Activated CD4-positive, alpha-beta T cell treated with anti-CD3 and anti-CD28 coated beads for 36 hours (primary cell): ENCODE measurements at regions of chr17 and their contacts with region 1.

Region 1: GRCh38 chr17:78383725-78384471 is 5.4 kb downstream of the PGS1 start:
- DNase-seq: peak; percentile 86
- ATAC-seq: peak; percentile 42
- H3K4me3 Mint-ChIP-seq: peak overlapping the region; percentile 88
- H3K27ac Mint-ChIP-seq: peak overlapping the region; percentile 98
- H3K4me1 Mint-ChIP-seq: peaks cover 89% of the 10 kb centered on the region
- H3K27me3 Mint-ChIP-seq: no peaks in the 10 kb centered on the region

Region 2: DNA sequence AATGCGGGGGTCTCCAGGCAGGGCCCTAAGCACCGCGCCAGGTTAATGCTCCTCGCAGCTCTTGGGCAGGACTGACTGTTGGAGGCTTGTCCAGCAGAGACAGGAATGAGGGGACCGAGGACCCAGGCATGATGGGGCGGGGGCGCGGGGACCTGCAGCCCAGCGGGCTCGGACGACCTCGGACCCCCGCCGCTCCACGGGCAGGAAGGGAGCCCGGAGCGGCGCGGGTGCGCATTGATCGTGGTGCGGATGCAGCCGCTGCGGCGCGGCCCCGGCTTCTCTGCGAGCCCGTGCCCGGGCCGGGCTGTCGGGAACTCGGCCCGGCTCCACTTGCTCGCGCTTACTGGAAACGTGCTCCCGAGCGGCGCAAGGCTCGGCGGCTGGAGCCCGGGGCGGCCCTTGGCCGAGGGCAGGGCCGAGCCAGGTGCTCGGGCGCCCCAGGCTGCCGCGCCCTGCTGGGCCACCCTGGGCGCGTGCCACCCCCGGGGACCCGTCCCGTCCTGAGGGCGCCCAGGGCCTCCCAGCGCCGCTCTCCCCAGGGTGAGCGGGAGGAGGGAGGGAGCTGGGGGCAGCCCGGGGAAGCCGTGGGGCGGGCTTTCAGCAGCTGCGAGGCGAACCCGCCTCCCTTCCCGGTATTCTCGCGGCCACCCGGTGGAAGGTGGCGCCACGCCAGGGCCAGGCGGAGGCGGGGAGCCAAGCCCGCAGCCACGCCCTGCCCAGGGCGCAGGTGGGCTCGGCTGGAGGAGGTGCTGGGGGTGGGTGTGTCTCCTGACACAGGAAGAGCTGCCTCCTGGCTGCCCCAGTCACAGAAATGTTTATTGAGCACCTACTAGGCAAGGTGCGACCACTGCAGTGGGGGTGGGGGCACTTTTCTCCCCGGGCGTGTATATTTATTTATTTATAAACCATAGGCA is 69.9 kb before region 1 on chr17:
- CTCF ChIA-PET with region 1: interaction called, 3 read pairs
- POLR2A ChIA-PET with region 1: no interaction called
- intact Hi-C with region 1: loop called in 1 of 2 experiments (anchors 1 kb)
- DNase-seq: peak; percentile 87
- ATAC-seq: peak; percentile 63
- H3K4me3 Mint-ChIP-seq: peak overlapping the region; percentile 52
- H3K27ac Mint-ChIP-seq: peak overlapping the region; percentile 74
- H3K4me1 Mint-ChIP-seq: peaks cover 49% of the 10 kb centered on the region
- H3K27me3 Mint-ChIP-seq: peaks cover 2% of the 10 kb centered on the region

Region 3: DNA sequence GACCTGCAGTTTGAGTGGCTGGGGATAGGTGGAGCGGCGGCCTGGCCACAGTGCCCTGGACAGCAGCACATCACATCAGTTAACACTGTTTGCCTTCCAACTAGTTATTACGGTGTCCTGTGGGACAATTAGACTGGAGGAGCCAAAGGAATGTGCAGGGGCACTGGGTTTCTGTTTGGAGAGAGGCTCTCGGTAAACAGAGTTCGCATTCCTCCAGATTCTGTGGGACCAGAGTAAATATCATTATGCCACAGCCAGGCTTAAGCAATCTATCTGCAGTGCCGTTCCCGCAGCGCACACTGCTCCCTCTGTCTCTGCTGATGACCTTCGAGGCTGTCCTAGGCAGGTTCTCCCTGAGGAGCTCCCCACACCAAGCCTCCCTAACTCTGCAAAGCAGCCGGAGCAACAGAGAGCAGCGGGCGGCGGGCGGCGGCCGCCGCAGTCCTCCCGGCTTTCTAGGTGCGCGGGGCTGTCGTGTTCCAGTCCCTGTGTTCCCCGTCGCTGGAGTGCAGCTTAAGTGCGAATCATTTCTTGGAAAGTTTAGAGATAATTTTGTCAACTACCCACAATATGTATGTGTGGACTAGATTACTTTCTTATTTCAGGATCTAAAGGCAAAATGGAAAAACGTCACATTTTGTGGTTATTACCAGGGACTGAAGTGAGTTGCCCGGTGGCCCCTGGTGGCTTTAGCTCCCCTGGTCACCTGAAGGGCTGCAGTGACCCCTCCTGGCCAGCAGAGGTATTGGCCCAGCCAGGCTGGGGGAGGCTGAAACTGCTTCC is 37.8 kb after region 1 on chr17:
- CTCF ChIA-PET with region 1: interaction called, 10 read pairs
- POLR2A ChIA-PET with region 1: interaction called, 6 read pairs
- intact Hi-C with region 1: no loop called
- DNase-seq: peak; percentile 85
- ATAC-seq: peak; percentile 86
- H3K4me3 Mint-ChIP-seq: no peak overlapping the region
- H3K27ac Mint-ChIP-seq: peak overlapping the region; percentile 34
- H3K4me1 Mint-ChIP-seq: peaks cover 38% of the 10 kb centered on the region
- H3K27me3 Mint-ChIP-seq: no peaks in the 10 kb centered on the region

Region 4: DNA sequence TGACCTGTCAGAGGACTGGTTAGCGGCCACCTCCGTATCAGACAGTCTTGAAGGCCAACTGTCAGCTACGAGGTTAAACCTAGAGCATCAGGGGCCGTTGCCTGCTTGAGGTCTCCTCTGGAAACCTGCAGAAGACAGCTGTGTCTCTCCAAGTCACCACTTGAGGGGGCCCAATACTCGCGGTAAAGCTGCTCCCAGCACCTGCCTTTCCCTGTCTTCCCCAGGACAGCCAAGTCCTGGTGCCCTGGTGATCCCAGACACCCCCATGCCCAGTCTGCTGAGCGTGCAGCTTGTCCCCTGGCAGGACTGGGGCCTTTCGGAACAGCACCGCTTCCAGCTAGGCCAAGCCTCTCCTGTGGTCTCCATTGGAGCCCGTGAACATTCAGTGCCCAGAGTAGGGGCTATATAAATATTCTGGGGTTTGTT is 113.2 kb after region 1 on chr17:
- CTCF ChIA-PET with region 1: no interaction called
- POLR2A ChIA-PET with region 1: no interaction called
- intact Hi-C with region 1: no loop called
- DNase-seq: peak; percentile 76
- ATAC-seq: peak; percentile 79
- H3K4me3 Mint-ChIP-seq: no peak overlapping the region
- H3K27ac Mint-ChIP-seq: no peak overlapping the region
- H3K4me1 Mint-ChIP-seq: no peaks in the 10 kb centered on the region
- H3K27me3 Mint-ChIP-seq: no peaks in the 10 kb centered on the region

Region 5: DNA sequence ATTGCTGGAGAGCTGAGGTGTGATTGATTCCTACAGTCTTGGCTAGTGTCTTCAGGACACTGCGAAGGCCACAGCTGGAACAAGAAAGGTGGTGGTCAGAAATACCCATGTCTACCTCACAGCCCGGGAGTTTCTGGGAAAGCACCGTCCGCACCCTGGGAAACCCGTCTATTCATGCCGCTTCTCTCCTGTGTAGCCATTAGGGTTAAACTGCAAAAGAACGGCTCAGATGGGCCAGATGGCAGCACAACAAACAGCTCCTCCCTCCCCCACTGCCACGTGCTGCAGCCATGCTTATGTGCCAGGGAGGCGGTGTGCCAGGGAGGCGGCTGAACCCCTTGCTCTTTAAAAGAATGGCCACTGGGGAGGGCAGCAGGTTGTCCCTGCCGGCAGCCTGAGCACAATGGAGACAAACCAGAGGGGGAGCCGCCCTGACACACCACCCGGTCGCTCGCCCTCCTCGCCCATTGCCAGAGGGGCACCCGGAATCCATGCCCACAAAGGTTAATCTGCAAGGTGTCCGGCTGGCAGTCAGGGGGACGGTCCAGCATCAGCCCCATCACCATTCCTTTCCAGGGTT is 333.0 kb after region 1 on chr17:
- CTCF ChIA-PET with region 1: no interaction called
- POLR2A ChIA-PET with region 1: no interaction called
- intact Hi-C with region 1: loop called in 1 of 2 experiments (anchors 5 kb)
- DNase-seq: peak; percentile 67
- ATAC-seq: peak; percentile 17
- H3K4me3 Mint-ChIP-seq: peak overlapping the region; percentile 43
- H3K27ac Mint-ChIP-seq: peak overlapping the region; percentile 83
- H3K4me1 Mint-ChIP-seq: peaks cover 90% of the 10 kb centered on the region
- H3K27me3 Mint-ChIP-seq: no peaks in the 10 kb centered on the region

Region 6: DNA sequence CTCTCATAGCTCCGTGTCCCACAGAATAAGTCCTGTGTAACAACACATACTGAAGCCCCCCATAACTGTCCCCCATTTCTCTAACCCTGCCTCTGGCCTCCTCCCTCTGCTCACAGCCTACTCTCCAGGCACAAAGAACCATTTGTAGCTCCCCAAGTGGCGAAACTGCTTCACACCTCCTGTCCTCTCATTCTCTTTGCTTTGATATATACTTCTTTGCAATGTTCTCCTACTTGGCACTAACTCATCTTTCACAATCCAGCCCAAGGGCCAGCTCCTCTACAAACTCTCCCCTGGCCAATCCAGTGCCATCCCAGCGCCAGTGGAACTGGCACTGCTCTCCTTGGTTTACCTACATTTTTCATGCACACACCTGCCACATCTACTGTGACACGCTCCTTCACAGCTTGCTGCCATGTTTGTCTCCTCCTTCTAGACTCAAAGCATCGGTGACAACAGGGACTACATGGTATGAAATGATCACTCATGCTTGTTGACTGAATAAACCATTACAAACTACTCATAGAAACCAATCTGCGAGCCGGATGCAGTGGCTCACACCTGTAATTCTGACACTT is 385.4 kb after region 1 on chr17:
- CTCF ChIA-PET with region 1: no interaction called
- POLR2A ChIA-PET with region 1: no interaction called
- intact Hi-C with region 1: loop called in 1 of 2 experiments (anchors 1 kb)
- DNase-seq: no peak
- ATAC-seq: peak; percentile 35
- H3K4me3 Mint-ChIP-seq: no peak overlapping the region
- H3K27ac Mint-ChIP-seq: no peak overlapping the region
- H3K4me1 Mint-ChIP-seq: peaks cover 45% of the 10 kb centered on the region
- H3K27me3 Mint-ChIP-seq: no peaks in the 10 kb centered on the region

Region 7: GRCh38 chr17:78774956-78775571 is 391.2 kb after region 1 on chr17:
- CTCF ChIA-PET with region 1: no interaction called
- POLR2A ChIA-PET with region 1: no interaction called
- intact Hi-C with region 1: loop called (anchors 1 to 5 kb)
- DNase-seq: peak; percentile 86
- ATAC-seq: peak; percentile 67
- H3K4me3 Mint-ChIP-seq: peak overlapping the region; percentile 84
- H3K27ac Mint-ChIP-seq: peak overlapping the region; percentile 100
- H3K4me1 Mint-ChIP-seq: peaks cover 68% of the 10 kb centered on the region
- H3K27me3 Mint-ChIP-seq: no peaks in the 10 kb centered on the region